IMR-90 (cell line): ENCODE measurements at regions of chr2 and their contacts with region 1.

Region 1: GRCh38 chr2:86440631-86441391 is at the start of gene KDM3A:
- DNase-seq: peak; percentile 99
- ATAC-seq: peak; percentile 87
- H3K4me3 ChIP-seq: peak within 1 kb of the TSS; percentile 97
- H3K27ac ChIP-seq: peak within 1 kb of the TSS; percentile 97
- H3K4me1 ChIP-seq: 0 out of 2 replicates have a peak, but pooled peaks cover 3% of the 10 kb centered on the region
- H3K27me3 ChIP-seq: no peaks in the 10 kb centered on the region
- CTCF ChIP-seq: no peak
- POLR2A ChIP-seq: no peak
- RAD21 ChIP-seq: no peak
- total RNA-seq, gene KDM3A: 33.3 and 35.8 TPM in 2 replicates

Region 2: GRCh38 chr2:85707304-85707703 is 733.5 kb before region 1 on chr2:
- CTCF ChIA-PET with region 1: no interaction called
- POLR2A ChIA-PET with region 1: no interaction called
- dilution Hi-C with region 1: no loop called
- in situ Hi-C with region 1: no loop called
- intact Hi-C with region 1: no loop called
- DNase-seq: peak; percentile 94
- ATAC-seq: peak; percentile 82
- H3K4me3 ChIP-seq: no peak overlapping the region
- H3K27ac ChIP-seq: no peak overlapping the region
- H3K4me1 ChIP-seq: peaks cover 19% of the 10 kb centered on the region
- H3K27me3 ChIP-seq: no peaks in the 10 kb centered on the region; the same call in 1 of the 2 replicates
- CTCF ChIP-seq: peak; percentile 92
- POLR2A ChIP-seq: no peak
- RAD21 ChIP-seq: peak; percentile 82

Region 3: GRCh38 chr2:86195055-86195807 is 245.6 kb before region 1 on chr2 and contains the start of gene IMMT:
- CTCF ChIA-PET with region 1: no interaction called
- POLR2A ChIA-PET with region 1: no interaction called
- dilution Hi-C with region 1: no loop called
- in situ Hi-C with region 1: no loop called
- intact Hi-C with region 1: loop called (anchors 1 kb)
- DNase-seq: peak; percentile 95
- ATAC-seq: peak; percentile 93
- H3K4me3 ChIP-seq: peak within 1 kb of the TSS; percentile 84
- H3K27ac ChIP-seq: peak within 1 kb of the TSS; percentile 92
- H3K4me1 ChIP-seq: peaks cover 6% of the 10 kb centered on the region
- H3K27me3 ChIP-seq: no peaks in the 10 kb centered on the region
- CTCF ChIP-seq: no peak
- POLR2A ChIP-seq: peak; percentile 98
- RAD21 ChIP-seq: no peak
- total RNA-seq, gene IMMT: 87.3 and 90.0 TPM in 2 replicates

Region 4: GRCh38 chr2:86201671-86202335 is 239.0 kb before region 1 on chr2:
- CTCF ChIA-PET with region 1: no interaction called
- POLR2A ChIA-PET with region 1: no interaction called
- dilution Hi-C with region 1: no loop called
- in situ Hi-C with region 1: no loop called
- intact Hi-C with region 1: loop called (anchors 2 kb)
- DNase-seq: no peak
- ATAC-seq: no peak
- H3K4me3 ChIP-seq: no peak overlapping the region
- H3K27ac ChIP-seq: no peak overlapping the region
- H3K4me1 ChIP-seq: 0 out of 2 replicates have a peak, but pooled peaks cover 1% of the 10 kb centered on the region
- H3K27me3 ChIP-seq: no peaks in the 10 kb centered on the region
- CTCF ChIP-seq: no peak
- POLR2A ChIP-seq: no peak
- RAD21 ChIP-seq: no peak

Region 5: GRCh38 chr2:86280191-86280667 is 160.6 kb before region 1 on chr2:
- CTCF ChIA-PET with region 1: no interaction called
- POLR2A ChIA-PET with region 1: no interaction called
- dilution Hi-C with region 1: no loop called
- in situ Hi-C with region 1: no loop called
- intact Hi-C with region 1: no loop called
- DNase-seq: peak; percentile 18
- ATAC-seq: no peak; the same call in 1 of the 2 replicates
- H3K4me3 ChIP-seq: no peak overlapping the region
- H3K27ac ChIP-seq: no peak overlapping the region
- H3K4me1 ChIP-seq: no peaks in the 10 kb centered on the region; the same call in 1 of the 2 replicates
- H3K27me3 ChIP-seq: peaks cover 38% of the 10 kb centered on the region
- CTCF ChIP-seq: no peak
- POLR2A ChIP-seq: no peak
- RAD21 ChIP-seq: no peak

Region 6: DNA sequence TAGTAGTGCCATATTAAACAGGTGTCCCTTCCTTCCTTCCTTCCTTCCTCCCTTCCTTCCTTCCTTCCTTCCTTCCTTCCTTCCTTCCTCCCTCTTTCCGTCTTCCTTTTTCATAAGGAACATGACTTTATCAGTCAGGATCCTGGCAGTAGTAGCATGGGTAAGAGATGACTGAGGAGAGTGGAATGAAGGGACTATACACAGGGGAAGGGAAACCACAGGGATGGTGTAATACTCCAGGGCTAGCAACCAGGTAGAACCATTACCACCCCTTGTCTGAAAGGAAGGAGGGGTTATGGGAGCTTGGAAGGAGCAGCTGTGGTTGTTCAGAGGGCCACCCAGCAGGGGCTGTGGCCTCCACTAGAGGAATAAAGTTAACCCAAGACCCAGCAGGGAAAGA is 22.9 kb before region 1 on chr2:
- CTCF ChIA-PET with region 1: no interaction called
- POLR2A ChIA-PET with region 1: no interaction called
- dilution Hi-C with region 1: no loop called
- in situ Hi-C with region 1: no loop called
- intact Hi-C with region 1: no loop called
- DNase-seq: peak; percentile 41
- ATAC-seq: no peak
- H3K4me3 ChIP-seq: no peak overlapping the region
- H3K27ac ChIP-seq: no peak overlapping the region
- H3K4me1 ChIP-seq: no peaks in the 10 kb centered on the region
- H3K27me3 ChIP-seq: peaks cover 11% of the 10 kb centered on the region
- CTCF ChIP-seq: no peak
- POLR2A ChIP-seq: no peak
- RAD21 ChIP-seq: no peak

Region 7: GRCh38 chr2:86476092-86476491 is 35.3 kb after region 1 on chr2:
- CTCF ChIA-PET with region 1: no interaction called
- POLR2A ChIA-PET with region 1: no interaction called
- dilution Hi-C with region 1: no loop called
- in situ Hi-C with region 1: no loop called
- intact Hi-C with region 1: loop called (anchors 5 kb)
- DNase-seq: peak; percentile 83
- ATAC-seq: peak; percentile 67
- H3K4me3 ChIP-seq: no peak overlapping the region
- H3K27ac ChIP-seq: no peak overlapping the region
- H3K4me1 ChIP-seq: peaks cover 6% of the 10 kb centered on the region; the same call in 1 of the 2 replicates
- H3K27me3 ChIP-seq: no peaks in the 10 kb centered on the region
- CTCF ChIP-seq: no peak
- POLR2A ChIP-seq: no peak
- RAD21 ChIP-seq: no peak

Region 8: GRCh38 chr2:86562922-86563649 is 122.3 kb after region 1 on chr2 and contains the start of gene CHMP3:
- CTCF ChIA-PET with region 1: no interaction called
- POLR2A ChIA-PET with region 1: interaction called, 5 read pairs
- dilution Hi-C with region 1: no loop called
- in situ Hi-C with region 1: no loop called
- intact Hi-C with region 1: loop called (anchors 2 kb)
- DNase-seq: peak; percentile 97
- ATAC-seq: peak; percentile 96
- H3K4me3 ChIP-seq: peak within 1 kb of the TSS; percentile 81
- H3K27ac ChIP-seq: peak within 1 kb of the TSS; percentile 95
- H3K4me1 ChIP-seq: peaks cover 2% of the 10 kb centered on the region
- H3K27me3 ChIP-seq: no peaks in the 10 kb centered on the region
- CTCF ChIP-seq: no peak
- POLR2A ChIP-seq: peak; percentile 93
- RAD21 ChIP-seq: no peak
- total RNA-seq, gene CHMP3: 38.4 and 81.4 TPM in 2 replicates

Region 9: DNA sequence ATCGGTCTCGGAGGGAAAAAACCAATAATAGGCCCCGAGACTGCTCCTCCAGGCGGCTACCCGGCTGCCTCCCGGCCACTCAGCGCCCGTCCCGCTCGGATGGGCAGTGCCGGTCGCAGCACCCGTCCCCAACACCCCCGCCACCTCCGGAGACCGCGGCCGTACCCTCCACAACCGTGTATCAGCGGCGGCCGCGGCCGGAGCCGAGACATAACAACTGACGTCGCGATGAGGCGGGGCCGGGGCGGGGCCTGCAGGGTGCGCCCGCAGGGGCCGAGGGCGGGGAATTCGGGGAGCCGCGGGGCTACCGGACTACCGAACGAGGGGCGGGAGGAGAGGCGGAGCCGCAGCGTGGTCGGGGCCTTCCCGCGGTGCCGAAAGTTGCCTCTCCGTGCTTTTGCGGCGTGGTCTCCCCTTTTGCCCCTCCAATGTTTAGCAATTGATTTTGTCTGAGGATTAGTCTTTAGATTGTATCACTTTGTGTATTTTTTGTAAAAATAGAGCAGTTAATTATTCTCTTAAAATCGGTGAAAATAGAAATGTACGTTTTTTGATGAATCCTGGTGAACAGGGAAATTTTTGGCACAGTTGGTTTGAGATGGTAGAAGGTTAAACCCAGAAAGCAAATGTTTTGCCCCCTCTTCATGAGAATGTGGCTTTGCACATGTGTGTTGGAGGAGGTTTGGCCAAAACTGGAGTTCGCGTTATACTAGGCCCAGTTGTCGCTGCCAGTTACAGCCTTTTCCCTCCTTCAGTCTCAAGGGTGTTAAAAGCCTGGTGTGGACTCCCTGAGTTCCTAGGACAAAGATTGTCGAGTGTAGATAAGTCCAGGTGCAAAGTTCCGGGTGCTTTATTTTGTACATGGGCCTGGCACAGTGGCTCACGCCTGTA is 183.1 kb after region 1 on chr2 and contains the start of gene RNF103:
- CTCF ChIA-PET with region 1: no interaction called
- POLR2A ChIA-PET with region 1: interaction called, 10 read pairs
- dilution Hi-C with region 1: no loop called
- in situ Hi-C with region 1: no loop called
- intact Hi-C with region 1: loop called (anchors 1 kb)
- DNase-seq: peak; percentile 81
- ATAC-seq: peak; percentile 93
- H3K4me3 ChIP-seq: peak within 1 kb of the TSS; percentile 80
- H3K27ac ChIP-seq: peak within 1 kb of the TSS; percentile 68
- H3K4me1 ChIP-seq: peaks cover 2% of the 10 kb centered on the region; the same call in 1 of the 2 replicates
- H3K27me3 ChIP-seq: no peaks in the 10 kb centered on the region; the same call in 1 of the 2 replicates
- CTCF ChIP-seq: no peak
- POLR2A ChIP-seq: peak; percentile 89
- RAD21 ChIP-seq: no peak
- total RNA-seq, gene RNF103: 5.6 and 10.0 TPM in 2 replicates

Region 10: GRCh38 chr2:86790676-86791572 is 350.1 kb after region 1 on chr2 and contains the start of gene CD8A:
- CTCF ChIA-PET with region 1: no interaction called
- POLR2A ChIA-PET with region 1: no interaction called
- dilution Hi-C with region 1: no loop called
- in situ Hi-C with region 1: no loop called
- intact Hi-C with region 1: no loop called
- DNase-seq: peak; percentile 11
- ATAC-seq: peak; percentile 45
- H3K4me3 ChIP-seq: no peak within 1 kb of the TSS
- H3K27ac ChIP-seq: no peak within 1 kb of the TSS
- H3K4me1 ChIP-seq: 0 out of 2 replicates have a peak, but pooled peaks cover 2% of the 10 kb centered on the region
- H3K27me3 ChIP-seq: peaks cover 81% of the 10 kb centered on the region
- CTCF ChIP-seq: no peak
- POLR2A ChIP-seq: no peak
- RAD21 ChIP-seq: no peak
- total RNA-seq, gene CD8A: not detected in 2 replicates